GM13977 (cell line): ENCODE measurements at regions of chr12 and their contacts with region 1.

Region 1: GRCh38 chr12:2890388-2891239 is at the start of gene TULP3:
- DNase-seq: peak; percentile 95
- CTCF ChIP-seq: no peak

Region 2: GRCh38 chr12:2682296-2683251 is 208.0 kb before region 1 on chr12:
- in situ Hi-C with region 1: no loop called
- DNase-seq: no peak
- CTCF ChIP-seq: peak; percentile 39

Region 3: GRCh38 chr12:3041558-3042164 is 151.0 kb after region 1 on chr12:
- in situ Hi-C with region 1: loop called (anchors 25 kb)
- DNase-seq: peak; percentile 89
- CTCF ChIP-seq: peak; percentile 83

Region 4: DNA sequence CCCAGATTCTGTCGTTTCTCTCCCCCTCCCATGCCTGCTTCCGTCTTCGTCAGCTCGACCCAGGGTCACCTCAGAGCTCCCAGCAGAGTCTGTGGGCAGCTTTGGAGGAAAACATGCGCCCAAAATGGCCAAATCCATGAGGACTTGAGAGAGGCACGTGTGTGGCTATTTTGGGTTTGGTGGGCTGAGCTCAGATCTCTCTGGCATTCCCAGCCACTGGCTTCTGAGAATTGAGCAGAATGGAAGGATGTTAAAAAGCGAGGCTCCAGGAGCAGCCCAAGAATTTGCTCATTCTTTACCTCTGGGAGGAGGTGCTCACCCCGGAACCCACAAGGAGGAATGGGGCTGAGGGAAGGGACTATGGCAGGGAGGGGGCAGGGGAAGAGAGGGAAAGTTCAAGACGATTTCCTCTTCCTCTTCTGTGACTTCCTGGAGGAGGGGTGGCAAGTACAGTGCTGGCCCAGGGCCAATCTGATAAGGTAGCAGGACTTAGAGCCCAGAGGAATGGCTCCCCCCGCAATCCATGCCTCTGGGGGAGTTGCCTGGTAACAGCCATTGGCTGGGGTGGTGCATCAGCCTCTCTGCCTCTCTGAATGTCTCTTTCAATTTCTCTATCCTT is 206.7 kb after region 1 on chr12:
- in situ Hi-C with region 1: no loop called
- DNase-seq: no peak
- CTCF ChIP-seq: no peak

Region 5: DNA sequence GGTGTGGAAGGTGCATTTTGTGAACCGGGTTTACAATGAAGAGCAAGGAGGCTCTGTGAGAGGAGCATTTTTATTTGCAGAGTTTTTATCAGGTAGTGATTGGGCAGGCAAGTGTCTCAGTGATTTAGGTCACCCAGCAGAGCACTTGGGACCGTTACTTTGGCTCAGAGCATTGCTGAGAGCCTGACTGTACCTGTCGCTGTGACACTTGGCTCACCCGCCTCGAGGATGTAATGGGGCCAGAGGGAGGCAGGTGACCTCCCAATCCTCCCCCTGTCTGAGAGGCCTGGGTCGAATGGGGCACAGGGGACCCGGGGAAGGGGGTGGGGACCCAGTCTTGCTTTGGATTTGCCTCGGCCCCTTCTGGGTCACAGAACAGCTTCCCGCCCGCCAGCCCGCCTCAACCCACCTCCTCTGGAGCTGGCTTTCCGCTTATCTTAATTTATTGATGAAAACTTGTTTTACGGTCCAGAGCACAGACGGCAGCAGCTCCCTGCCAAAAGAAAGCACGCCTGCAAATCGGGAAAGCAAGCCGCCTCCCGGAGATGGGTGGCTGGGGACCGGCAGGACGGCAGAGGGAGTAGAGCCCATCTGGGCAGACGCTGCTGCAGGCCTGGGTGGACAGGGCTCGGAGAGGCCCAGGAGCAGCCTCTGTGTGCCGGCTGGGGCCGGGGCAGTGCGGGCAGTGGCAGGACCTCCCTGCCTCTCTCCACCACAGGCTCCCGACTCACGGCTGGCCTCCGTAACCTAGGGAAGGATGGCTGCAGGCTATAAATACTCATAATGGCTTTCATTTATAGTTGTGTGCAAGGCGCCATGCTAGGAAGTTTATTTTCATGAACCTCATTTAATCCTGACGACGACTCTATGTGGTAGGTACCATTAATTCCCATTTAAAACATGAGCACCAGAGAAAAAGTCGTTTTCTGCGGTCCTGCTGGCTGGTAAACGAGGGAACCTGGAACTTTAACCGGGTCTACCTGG is 373.6 kb after region 1 on chr12:
- in situ Hi-C with region 1: no loop called
- DNase-seq: no peak
- CTCF ChIP-seq: no peak

Region 6: GRCh38 chr12:3622021-3622821 is 731.6 kb after region 1 on chr12:
- in situ Hi-C with region 1: no loop called
- DNase-seq: no peak
- CTCF ChIP-seq: no peak